ENCODE measurements at regions of chr9 and their contacts with region 1.

Region 1: GRCh38 chr9:26339796-26340195 is 552.8 kb downstream of the CAAP1 start:
- DNase-seq: no peak
- H3K4me3 ChIP-seq: no peak overlapping the region
- H3K27ac ChIP-seq: no peak overlapping the region
- H3K4me1 ChIP-seq: no peaks in the 10 kb centered on the region
- H3K27me3 ChIP-seq: no peaks in the 10 kb centered on the region
- CTCF ChIP-seq: no peak

Region 2: DNA sequence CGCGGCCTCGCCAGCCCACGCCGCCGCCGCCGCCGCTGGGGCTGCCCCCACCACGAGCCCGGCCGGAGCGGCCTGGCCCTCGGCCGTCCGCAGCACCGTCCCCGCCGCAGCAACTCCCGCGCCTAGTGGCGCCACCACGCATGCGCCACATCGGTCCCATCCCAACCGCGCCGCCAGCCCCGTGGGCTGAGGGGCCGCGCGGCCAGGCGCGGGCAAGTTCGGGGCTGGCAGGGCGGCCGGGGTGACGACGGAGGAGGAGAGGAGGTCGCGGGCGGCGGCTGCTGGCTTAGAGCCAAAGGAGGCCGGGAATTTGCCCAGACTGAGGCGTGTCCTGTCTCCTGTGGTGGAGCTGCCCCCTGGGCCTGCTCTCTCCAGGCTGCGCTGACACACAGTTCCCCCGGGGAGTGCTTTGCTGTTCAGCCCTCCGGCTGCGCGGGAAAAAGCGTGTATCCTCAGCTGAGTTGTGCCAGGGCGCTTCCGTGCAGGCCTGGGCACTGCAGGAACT is 661.6 kb before region 1 on chr9 and contains the start of gene TUSC1:
- CTCF ChIA-PET with region 1: interaction called, 11 read pairs
- POLR2A ChIA-PET with region 1: no interaction called
- intact Hi-C with region 1: no loop called
- DNase-seq: peak; percentile 21 to 72
- H3K4me3 ChIP-seq: peak within 1 kb of the TSS; percentile 75
- H3K27ac ChIP-seq: peak within 1 kb of the TSS; percentile 72
- H3K4me1 ChIP-seq: peaks cover 14% of the 10 kb centered on the region
- H3K27me3 ChIP-seq: no peaks in the 10 kb centered on the region
- CTCF ChIP-seq: no peak
- total RNA-seq, gene TUSC1: 0.39 and 0.88 TPM in 2 replicates